Breast epithelium (tissue), 4 donors: ENCODE measurements at regions of chr19 and their contacts with region 1.

Region 1: GRCh38 chr19:52139252-52140031 is at the start of gene ZNF616:
- DNase-seq: peak; percentile 95 to 99
- H3K4me3 ChIP-seq: peak within 1 kb of the TSS; percentile 73 to 95 (median 78)
- H3K27ac ChIP-seq: peak within 1 kb of the TSS; percentile 91 to 97
- H3K4me1 ChIP-seq: peaks cover 0 to 4% of the 10 kb centered on the region in 2 donors
- H3K27me3 ChIP-seq: no peaks in the 10 kb centered on the region
- CTCF ChIP-seq: peak; percentile 59 to 88 (median 88)
- POLR2A ChIP-seq: peak; percentile 77
- total RNA-seq, gene ZNF616: 5.8 to 14.0 (median 7.2) TPM

Region 2: GRCh38 chr19:52155596-52156359 is 16.3 kb after region 1 on chr19:
- intact Hi-C with region 1: no loop called
- DNase-seq: no peak
- H3K4me3 ChIP-seq: no peak overlapping the region
- H3K27ac ChIP-seq: no peak overlapping the region
- H3K4me1 ChIP-seq: no peaks in the 10 kb centered on the region
- H3K27me3 ChIP-seq: no peaks in the 10 kb centered on the region
- CTCF ChIP-seq: no peak
- POLR2A ChIP-seq: no peak

Region 3: GRCh38 chr19:52231154-52231910 is 91.9 kb after region 1 on chr19:
- intact Hi-C with region 1: loop called (anchors 5 kb)
- DNase-seq: no peak
- H3K4me3 ChIP-seq: no peak overlapping the region
- H3K27ac ChIP-seq: no peak overlapping the region
- H3K4me1 ChIP-seq: no peaks in the 10 kb centered on the region
- H3K27me3 ChIP-seq: no peaks in the 10 kb centered on the region
- CTCF ChIP-seq: no peak
- POLR2A ChIP-seq: no peak